ENCODE measurements at regions of chr7 and their contacts with region 1.

Region 1: GRCh38 chr7:144818511-144818910 is 17.3 kb downstream of the TPK1 start:
- DNase-seq: peak; percentile 65
- H3K4me3 Mint-ChIP-seq: no peak overlapping the region
- H3K27ac Mint-ChIP-seq: peak overlapping the region; percentile 83
- H3K4me1 Mint-ChIP-seq: peaks cover 74% of the 10 kb centered on the region
- H3K27me3 Mint-ChIP-seq: no peaks in the 10 kb centered on the region

Region 2: DNA sequence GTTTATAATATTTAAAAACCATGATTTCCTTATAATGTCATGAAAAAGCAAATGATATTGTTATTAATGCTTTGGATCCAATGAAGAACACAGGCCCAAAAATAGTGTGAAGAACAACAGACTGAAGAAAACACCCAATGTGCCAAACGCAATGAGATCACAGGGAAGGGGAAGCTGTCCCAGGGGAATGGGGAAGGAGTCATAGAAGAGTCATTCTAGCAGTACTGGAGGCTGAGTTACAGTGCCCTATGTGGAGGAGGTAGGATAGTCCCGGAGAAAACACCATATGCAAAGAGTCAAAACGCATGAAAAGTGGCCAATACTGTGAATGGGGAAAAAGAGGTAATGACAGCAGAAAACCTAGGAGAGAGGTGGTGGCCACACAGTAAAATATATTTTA is 33.6 kb before region 1 on chr7:
- CTCF ChIA-PET with region 1: no interaction called
- POLR2A ChIA-PET with region 1: no interaction called
- DNase-seq: no peak
- H3K4me3 Mint-ChIP-seq: no peak overlapping the region
- H3K27ac Mint-ChIP-seq: no peak overlapping the region
- H3K4me1 Mint-ChIP-seq: peaks cover 2% of the 10 kb centered on the region
- H3K27me3 Mint-ChIP-seq: no peaks in the 10 kb centered on the region

Region 3: DNA sequence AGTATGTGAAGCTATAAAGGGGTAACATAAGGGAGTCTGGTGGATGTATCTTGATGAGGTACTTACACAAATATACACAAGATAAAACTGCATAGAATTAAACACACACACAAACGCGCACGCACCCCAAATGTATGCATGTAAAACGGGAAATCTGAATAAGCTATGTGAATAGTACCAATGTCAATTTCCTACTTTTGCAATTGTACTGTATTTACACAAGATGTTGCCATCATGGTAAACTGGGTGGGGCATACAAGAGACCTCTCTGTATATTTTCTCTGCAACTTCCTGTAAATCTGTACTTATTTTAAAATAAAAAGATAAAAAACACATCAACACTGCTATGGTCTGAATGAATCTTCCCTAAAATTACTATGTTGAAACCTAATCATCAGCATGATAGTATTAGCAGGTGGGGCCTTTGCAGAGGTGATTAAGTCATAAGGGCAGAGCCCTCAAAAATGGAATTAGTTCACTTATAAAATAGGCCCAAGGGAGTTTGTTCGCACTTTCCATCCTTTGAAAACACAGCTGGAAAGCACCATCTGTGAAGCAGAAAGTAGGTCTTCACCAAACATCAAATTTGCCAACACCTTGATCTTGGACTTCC is 12.8 kb before region 1 on chr7:
- CTCF ChIA-PET with region 1: no interaction called
- POLR2A ChIA-PET with region 1: no interaction called
- DNase-seq: no peak
- H3K4me3 Mint-ChIP-seq: no peak overlapping the region
- H3K27ac Mint-ChIP-seq: no peak overlapping the region
- H3K4me1 Mint-ChIP-seq: peaks cover 16% of the 10 kb centered on the region
- H3K27me3 Mint-ChIP-seq: no peaks in the 10 kb centered on the region

Region 4: GRCh38 chr7:144835652-144836544 is 17.4 kb after region 1 on chr7 and contains the start of gene TPK1:
- CTCF ChIA-PET with region 1: interaction called, 14 read pairs
- POLR2A ChIA-PET with region 1: interaction called, 12 read pairs
- DNase-seq: peak; percentile 91
- H3K4me3 Mint-ChIP-seq: peak within 1 kb of the TSS; percentile 93
- H3K27ac Mint-ChIP-seq: peak within 1 kb of the TSS; percentile 99
- H3K4me1 Mint-ChIP-seq: peaks cover 43% of the 10 kb centered on the region
- H3K27me3 Mint-ChIP-seq: no peaks in the 10 kb centered on the region
- total RNA-seq, gene TPK1: 11.8 to 13.2 TPM

Measured in activated CD4-positive, alpha-beta T cell treated with anti-CD3 and anti-CD28 coated beads, Interleukin-2, amount 10 ng/mL, durations not matched to agents 7 days and 5 days (primary cell).